ENCODE measurements at regions of chr19 and their contacts with region 1.

Region 1: DNA sequence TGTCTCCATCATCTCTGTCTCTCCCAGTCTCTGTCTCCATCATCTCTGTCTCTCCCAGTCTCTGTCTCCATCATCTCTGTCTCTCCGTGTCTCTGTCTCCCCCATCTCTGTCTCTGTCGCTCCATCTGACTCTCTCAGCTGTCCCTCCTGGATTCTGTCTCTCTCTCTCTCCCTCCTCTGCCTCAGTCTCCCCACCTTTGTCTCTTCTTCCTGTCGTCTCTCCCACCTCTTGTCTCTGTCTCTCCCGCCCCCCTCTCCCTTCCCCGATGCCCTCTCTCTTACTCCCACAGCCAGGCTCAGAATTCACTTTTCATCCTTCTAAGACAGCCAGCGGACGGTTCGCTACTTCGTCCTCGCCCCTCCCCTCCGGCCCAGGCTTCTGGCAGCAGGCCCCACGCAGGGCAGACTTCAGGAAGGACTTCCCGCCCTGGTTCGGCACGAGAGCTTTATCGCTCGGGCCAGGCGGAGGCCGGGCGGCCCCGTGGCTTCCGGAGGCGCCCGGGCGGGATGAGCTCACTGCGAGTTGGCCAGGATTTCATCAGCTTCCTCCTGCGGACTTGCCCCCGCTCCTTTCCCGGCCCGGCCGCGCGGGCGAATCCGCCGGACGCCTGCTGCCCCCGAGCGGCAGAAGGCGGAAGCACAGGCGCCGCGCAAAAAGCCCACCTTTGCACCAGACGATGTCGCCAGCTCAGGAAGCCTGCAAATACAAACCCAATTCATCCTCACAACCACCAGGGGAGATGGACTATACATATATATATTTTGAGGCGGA is 12.4 kb upstream of the CCDC9 start:
- DNase-seq: peak; percentile 80 to 94 (median 86)
- ATAC-seq: peak; percentile 69
- H3K4me3 ChIP-seq: peak overlapping the region; percentile 42
- H3K4me3 Mint-ChIP-seq: peak overlapping the region in 7 of 10 donors; percentile 68 to 86 (median 85)
- H3K27ac ChIP-seq: peak overlapping the region; percentile 28
- H3K27ac Mint-ChIP-seq: peak overlapping the region in 6 of 9 donors; percentile 61 to 95 (median 90)
- H3K4me1 ChIP-seq: peaks cover 35 to 37% of the 10 kb centered on the region in 2 donors
- H3K4me1 Mint-ChIP-seq: peaks cover 9 to 33% (median 25%) of the 10 kb centered on the region in 7 donors
- H3K27me3 ChIP-seq: no peaks in the 10 kb centered on the region
- H3K27me3 Mint-ChIP-seq: peaks cover 0 to 6% (median 0%) of the 10 kb centered on the region in 5 donors

Region 2: DNA sequence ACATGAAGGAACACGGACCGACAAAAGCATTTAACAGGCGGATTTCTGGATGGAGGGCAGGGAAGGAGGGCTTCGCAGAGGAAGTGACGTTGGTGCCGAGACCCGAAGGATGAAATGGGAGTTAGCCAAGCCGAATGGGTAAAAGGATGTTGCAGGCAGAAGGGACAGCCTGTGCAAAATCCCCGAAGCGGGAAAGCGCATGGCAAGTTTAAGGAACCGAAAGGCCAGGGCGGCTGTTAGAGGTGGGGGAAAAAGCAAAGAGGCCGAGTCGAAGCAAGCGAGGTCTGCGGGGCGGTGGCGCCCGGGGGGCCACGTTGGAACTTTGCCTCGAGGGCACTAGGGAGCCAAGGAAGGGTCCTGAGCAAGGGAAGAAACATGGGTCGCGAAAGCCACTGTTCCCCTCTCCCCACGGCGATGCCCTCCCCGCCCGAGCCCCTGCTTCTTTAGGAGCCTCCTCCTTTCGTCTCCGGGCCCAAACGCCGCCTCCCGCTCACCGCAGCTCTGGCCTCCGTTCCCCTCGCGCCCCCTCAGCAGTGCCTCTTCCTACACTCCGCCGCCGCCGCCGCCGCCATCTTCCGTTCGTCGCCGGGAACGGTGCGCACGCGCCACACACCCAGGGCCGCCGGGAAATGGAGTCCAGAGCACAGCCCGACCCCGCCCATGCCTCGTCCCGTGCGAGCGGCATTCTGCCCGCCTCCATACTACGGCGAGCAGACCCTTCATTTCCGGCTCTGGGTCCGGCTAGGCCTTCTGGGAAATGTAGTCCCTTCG is 1381.2 kb before region 1 on chr19 and contains the start of gene SYMPK:
- CTCF ChIA-PET with region 1: no interaction called
- POLR2A ChIA-PET with region 1: no interaction called
- intact Hi-C with region 1: loop called in 1 of 2 experiments (anchors 5 kb)
- DNase-seq: peak; percentile 93 to 99 (median 99)
- ATAC-seq: peak; percentile 99
- H3K4me3 ChIP-seq: peak within 1 kb of the TSS; percentile 95
- H3K4me3 Mint-ChIP-seq: peak within 1 kb of the TSS; percentile 90 to 100 (median 96)
- H3K27ac ChIP-seq: peak within 1 kb of the TSS; percentile 86
- H3K27ac Mint-ChIP-seq: peak within 1 kb of the TSS; percentile 84 to 99 (median 95)
- H3K4me1 ChIP-seq: peaks cover 12 to 15% of the 10 kb centered on the region in 2 donors
- H3K4me1 Mint-ChIP-seq: peaks cover 29 to 37% (median 36%) of the 10 kb centered on the region in 7 donors
- H3K27me3 ChIP-seq: peaks cover 0 to 4% of the 10 kb centered on the region in 2 donors
- H3K27me3 Mint-ChIP-seq: peaks cover 6 to 39% (median 21%) of the 10 kb centered on the region in 5 donors
- total RNA-seq, gene SYMPK: 81.3 to 110 (median 96.4) TPM

Region 3: DNA sequence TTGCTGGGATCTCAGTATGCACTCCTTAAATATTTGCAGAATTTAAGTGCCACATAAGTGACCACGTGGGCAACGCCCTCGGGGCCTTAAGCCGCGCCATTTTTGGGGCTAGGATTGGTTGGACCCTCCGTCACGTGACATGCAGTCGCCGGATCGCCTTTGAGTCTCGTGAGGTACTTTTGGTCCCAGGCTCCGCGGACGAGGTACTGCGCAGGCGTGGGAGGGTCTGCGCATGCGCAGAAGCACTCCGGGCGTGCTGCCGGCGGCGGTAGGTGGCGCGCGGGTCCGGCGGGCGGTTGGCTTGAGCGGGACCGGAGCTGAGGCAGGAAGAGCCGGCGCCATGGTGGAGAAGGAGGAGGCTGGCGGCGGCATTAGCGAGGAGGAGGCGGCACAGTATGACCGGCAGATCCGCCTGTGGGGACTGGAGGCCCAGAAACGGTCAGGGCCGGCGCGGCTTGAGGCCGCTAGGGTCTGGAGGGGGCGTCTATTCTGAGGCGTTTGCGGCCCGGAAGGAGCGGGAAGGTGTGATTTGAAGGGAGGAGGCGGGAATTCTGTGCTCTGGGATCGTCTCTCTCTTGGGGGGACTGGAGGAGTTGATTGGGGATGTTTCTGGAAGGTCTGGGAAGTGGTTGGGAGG is 113.3 kb before region 1 on chr19 and contains the start of gene SAE1:
- CTCF ChIA-PET with region 1: interaction called, 26 read pairs
- POLR2A ChIA-PET with region 1: interaction called, 15 read pairs
- intact Hi-C with region 1: loop called in 1 of 2 experiments (anchors 1 kb)
- DNase-seq: peak; percentile 84 to 97 (median 91)
- ATAC-seq: peak; percentile 94
- H3K4me3 ChIP-seq: peak within 1 kb of the TSS; percentile 98
- H3K4me3 Mint-ChIP-seq: peak within 1 kb of the TSS; percentile 92 to 100 (median 99)
- H3K27ac ChIP-seq: peak within 1 kb of the TSS; percentile 85
- H3K27ac Mint-ChIP-seq: peak within 1 kb of the TSS; percentile 87 to 97 (median 92)
- H3K4me1 ChIP-seq: peaks cover 11 to 25% of the 10 kb centered on the region in 2 donors
- H3K4me1 Mint-ChIP-seq: peaks cover 44 to 57% (median 52%) of the 10 kb centered on the region in 7 donors
- H3K27me3 ChIP-seq: no peaks in the 10 kb centered on the region
- H3K27me3 Mint-ChIP-seq: peaks cover 0 to 7% (median 0%) of the 10 kb centered on the region in 5 donors
- total RNA-seq, gene SAE1: 34.3 to 115 (median 46.4) TPM

Region 4: DNA sequence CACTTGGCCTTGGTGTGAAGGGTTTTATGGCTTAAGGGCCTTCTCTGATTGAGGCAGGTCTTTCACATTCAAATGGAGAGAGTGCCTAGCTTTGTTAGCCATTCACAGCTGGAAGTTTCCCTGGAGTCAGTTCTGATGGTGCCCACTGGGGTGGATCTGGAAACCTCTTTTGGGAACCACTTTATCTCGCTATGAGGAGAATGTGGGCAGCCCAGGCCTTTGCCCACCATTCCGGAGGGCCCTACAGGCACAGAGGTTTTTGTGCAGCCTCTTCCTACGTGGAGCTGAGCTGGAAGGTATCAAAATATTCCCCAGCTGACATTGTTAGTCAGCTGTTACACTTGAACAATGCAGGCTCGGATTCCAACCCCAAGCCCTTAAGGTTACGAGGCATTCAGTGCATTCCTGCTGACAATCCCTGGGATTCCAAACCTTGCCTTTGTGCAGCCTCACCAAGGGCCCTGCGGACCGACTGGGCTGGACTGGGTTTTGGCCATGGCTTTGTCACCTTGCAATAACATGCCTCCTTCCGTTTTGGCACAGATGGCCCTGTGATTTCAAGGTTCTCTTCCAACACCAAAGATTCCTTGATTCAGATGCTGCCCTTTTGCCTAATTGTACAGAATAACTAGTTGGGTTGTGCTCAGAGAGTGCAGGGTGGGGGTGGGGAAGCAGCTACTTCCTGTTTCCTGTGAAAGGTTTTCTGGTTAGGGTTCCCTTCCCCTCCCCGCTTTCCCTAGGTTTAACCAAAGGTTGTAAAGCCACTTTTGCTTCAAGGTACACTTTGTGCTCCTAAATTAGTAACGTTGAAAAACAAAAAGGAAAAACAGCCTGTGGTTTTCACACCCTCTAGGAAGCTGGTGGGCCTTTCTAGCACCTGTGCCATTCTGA is 86.3 kb before region 1 on chr19:
- CTCF ChIA-PET with region 1: interaction called, 175 read pairs
- POLR2A ChIA-PET with region 1: interaction called, 50 read pairs
- intact Hi-C with region 1: no loop called
- DNase-seq: peak in 7 of 9 donors; percentile 38 to 58 (median 48)
- ATAC-seq: peak; percentile 45
- H3K4me3 ChIP-seq: peak overlapping the region; percentile 55
- H3K4me3 Mint-ChIP-seq: peak overlapping the region; percentile 79 to 98 (median 84)
- H3K27ac ChIP-seq: peak overlapping the region; percentile 66
- H3K27ac Mint-ChIP-seq: peak overlapping the region; percentile 82 to 98 (median 97)
- H3K4me1 ChIP-seq: peaks cover 57 to 72% of the 10 kb centered on the region in 2 donors
- H3K4me1 Mint-ChIP-seq: peaks cover 35 to 82% (median 66%) of the 10 kb centered on the region in 7 donors
- H3K27me3 ChIP-seq: no peaks in the 10 kb centered on the region
- H3K27me3 Mint-ChIP-seq: no peaks in the 10 kb centered on the region

Region 5: DNA sequence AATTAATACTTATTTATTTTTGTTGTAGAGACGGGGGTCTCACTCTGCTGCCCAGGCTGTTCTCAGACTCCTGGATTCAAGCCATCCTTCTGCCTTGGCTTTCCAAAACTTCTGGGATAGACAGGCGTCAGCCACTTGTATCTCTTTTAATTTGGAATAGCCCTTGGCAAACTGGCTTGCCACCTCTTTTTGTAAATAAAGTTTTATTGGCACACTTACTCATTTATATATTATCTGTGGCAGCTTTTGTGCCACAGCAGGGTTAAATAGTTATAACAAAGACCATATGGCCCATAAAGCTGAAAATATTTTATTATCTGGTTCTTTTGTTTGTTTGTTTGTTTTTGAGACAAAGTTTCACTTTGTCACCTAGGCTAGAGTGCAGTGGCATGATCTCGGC is 43.4 kb before region 1 on chr19:
- CTCF ChIA-PET with region 1: interaction called, 11 read pairs
- POLR2A ChIA-PET with region 1: no interaction called
- intact Hi-C with region 1: no loop called
- DNase-seq: no peak
- ATAC-seq: no peak
- H3K4me3 ChIP-seq: no peak overlapping the region
- H3K4me3 Mint-ChIP-seq: no peak overlapping the region
- H3K27ac ChIP-seq: no peak overlapping the region
- H3K27ac Mint-ChIP-seq: no peak overlapping the region
- H3K4me1 ChIP-seq: peaks cover 0 to 7% of the 10 kb centered on the region in 2 donors
- H3K4me1 Mint-ChIP-seq: peaks cover 14 to 40% (median 26%) of the 10 kb centered on the region in 7 donors
- H3K27me3 ChIP-seq: no peaks in the 10 kb centered on the region
- H3K27me3 Mint-ChIP-seq: no peaks in the 10 kb centered on the region

Region 6: GRCh38 chr19:47231215-47231984 is 12.6 kb before region 1 on chr19:
- CTCF ChIA-PET with region 1: interaction called, 25 read pairs
- POLR2A ChIA-PET with region 1: interaction called, 37 read pairs
- intact Hi-C with region 1: loop called (anchors 1 kb)
- DNase-seq: peak; percentile 77 to 94 (median 86)
- ATAC-seq: peak; percentile 78
- H3K4me3 ChIP-seq: peak overlapping the region; percentile 54
- H3K4me3 Mint-ChIP-seq: peak overlapping the region in 9 of 10 donors; percentile 69 to 88 (median 81)
- H3K27ac ChIP-seq: peak overlapping the region; percentile 80
- H3K27ac Mint-ChIP-seq: peak overlapping the region; percentile 20 to 92 (median 90)
- H3K4me1 ChIP-seq: peaks cover 36 to 45% of the 10 kb centered on the region in 2 donors
- H3K4me1 Mint-ChIP-seq: peaks cover 20 to 29% (median 24%) of the 10 kb centered on the region in 7 donors
- H3K27me3 ChIP-seq: no peaks in the 10 kb centered on the region
- H3K27me3 Mint-ChIP-seq: peaks cover 0 to 4% (median 0%) of the 10 kb centered on the region in 5 donors

Measured in naive thymus-derived CD4-positive, alpha-beta T cell (primary cell).